ENCODE measurements at regions of chr3 and their contacts with region 1.

Region 1: GRCh38 chr3:129316131-129317013 is 37.7 kb downstream of the HMCES start:
- DNase-seq: peak; percentile 90
- H3K4me3 Mint-ChIP-seq: peak overlapping the region; percentile 95
- H3K27ac Mint-ChIP-seq: peak overlapping the region; percentile 79
- H3K4me1 Mint-ChIP-seq: peaks cover 34% of the 10 kb centered on the region
- H3K27me3 Mint-ChIP-seq: no peaks in the 10 kb centered on the region

Region 2: GRCh38 chr3:128680602-128681368 is 635.6 kb before region 1 on chr3:
- CTCF ChIA-PET with region 1: no interaction called
- POLR2A ChIA-PET with region 1: interaction called, 12 read pairs
- DNase-seq: peak; percentile 97
- H3K4me3 Mint-ChIP-seq: peak overlapping the region; percentile 86
- H3K27ac Mint-ChIP-seq: peak overlapping the region; percentile 86
- H3K4me1 Mint-ChIP-seq: peaks cover 38% of the 10 kb centered on the region
- H3K27me3 Mint-ChIP-seq: peaks cover 6% of the 10 kb centered on the region

Region 3: DNA sequence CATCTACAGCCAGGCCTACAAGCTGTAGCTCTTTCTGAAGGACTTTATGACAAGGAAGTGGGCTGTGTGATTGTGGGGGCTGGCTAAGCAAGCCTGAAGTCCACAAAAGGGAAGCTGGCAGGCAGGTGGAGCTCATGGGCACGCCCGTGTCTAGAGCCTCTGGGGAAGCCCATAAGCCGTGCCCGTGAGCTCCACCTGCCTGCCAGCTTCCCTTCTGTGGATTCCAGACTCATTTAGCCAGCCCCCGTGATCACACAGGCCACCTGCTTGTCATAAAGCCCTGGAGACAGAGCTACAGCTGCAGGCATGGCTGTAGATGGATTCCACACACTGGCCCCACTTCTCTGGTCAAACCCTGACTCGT is 300.0 kb before region 1 on chr3:
- CTCF ChIA-PET with region 1: interaction called, 4 read pairs
- POLR2A ChIA-PET with region 1: interaction called, 39 read pairs
- DNase-seq: peak; percentile 68
- H3K4me3 Mint-ChIP-seq: peak overlapping the region; percentile 64
- H3K27ac Mint-ChIP-seq: peak overlapping the region; percentile 87
- H3K4me1 Mint-ChIP-seq: peaks cover 37% of the 10 kb centered on the region
- H3K27me3 Mint-ChIP-seq: no peaks in the 10 kb centered on the region

Region 4: DNA sequence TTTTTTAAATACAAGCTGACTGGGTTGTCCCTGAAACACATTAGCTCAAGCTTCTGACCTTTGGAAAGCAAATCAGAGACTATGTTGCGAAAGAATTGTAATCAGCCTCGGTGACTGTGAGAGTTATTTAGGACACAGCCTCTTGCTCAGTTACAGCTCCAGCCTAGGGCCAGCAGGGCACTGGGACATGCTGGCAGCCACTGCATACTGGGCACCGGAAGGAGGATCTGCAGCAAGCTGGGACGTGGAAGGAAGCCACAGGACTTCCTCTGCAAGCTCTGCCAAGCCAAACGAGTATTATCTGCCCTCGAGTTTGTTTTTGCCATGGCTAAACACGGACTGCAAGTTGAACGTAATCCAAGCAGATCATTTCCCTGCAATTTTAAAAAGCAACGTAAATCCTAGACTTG is 91.4 kb before region 1 on chr3:
- CTCF ChIA-PET with region 1: no interaction called
- POLR2A ChIA-PET with region 1: interaction called, 10 read pairs
- DNase-seq: peak; percentile 42
- H3K4me3 Mint-ChIP-seq: no peak overlapping the region
- H3K27ac Mint-ChIP-seq: peak overlapping the region; percentile 73
- H3K4me1 Mint-ChIP-seq: peaks cover 50% of the 10 kb centered on the region
- H3K27me3 Mint-ChIP-seq: no peaks in the 10 kb centered on the region

Region 5: DNA sequence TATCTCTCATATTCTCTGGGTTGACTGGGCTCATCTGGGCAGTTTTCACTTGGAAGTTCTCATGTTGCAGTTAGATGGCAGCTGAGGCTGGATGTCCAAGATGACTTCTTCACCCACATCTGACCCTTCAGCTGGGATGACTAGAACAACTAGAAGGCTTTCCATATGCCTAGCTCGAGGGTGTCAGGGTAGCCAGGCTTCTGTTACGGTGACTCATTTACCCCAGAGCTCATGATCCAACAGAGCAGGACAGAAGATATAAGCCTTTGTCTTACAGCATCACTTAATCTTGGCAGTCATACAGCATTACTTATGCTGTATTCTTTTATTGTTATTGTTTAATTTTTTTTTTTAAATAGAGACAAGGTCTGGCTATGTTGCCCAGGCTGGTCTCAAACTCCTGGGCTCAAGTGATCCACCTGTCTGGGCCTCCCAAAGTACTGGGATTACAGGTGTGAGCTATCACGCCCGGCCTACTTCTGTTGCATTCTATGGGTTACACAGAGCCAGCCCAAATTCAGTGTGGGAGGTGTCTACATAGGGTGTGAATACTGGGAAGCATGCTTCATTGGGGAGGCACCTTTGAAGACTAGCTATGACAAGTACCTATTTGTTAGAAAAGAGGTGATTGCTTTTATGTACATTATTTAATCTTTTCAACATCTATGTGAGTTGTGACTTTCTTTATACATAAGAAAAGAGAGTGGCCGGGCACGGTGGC is 27.0 kb before region 1 on chr3:
- CTCF ChIA-PET with region 1: interaction called, 6 read pairs
- POLR2A ChIA-PET with region 1: interaction called, 197 read pairs
- DNase-seq: no peak
- H3K4me3 Mint-ChIP-seq: no peak overlapping the region
- H3K27ac Mint-ChIP-seq: no peak overlapping the region
- H3K4me1 Mint-ChIP-seq: no peaks in the 10 kb centered on the region
- H3K27me3 Mint-ChIP-seq: no peaks in the 10 kb centered on the region

Region 6: DNA sequence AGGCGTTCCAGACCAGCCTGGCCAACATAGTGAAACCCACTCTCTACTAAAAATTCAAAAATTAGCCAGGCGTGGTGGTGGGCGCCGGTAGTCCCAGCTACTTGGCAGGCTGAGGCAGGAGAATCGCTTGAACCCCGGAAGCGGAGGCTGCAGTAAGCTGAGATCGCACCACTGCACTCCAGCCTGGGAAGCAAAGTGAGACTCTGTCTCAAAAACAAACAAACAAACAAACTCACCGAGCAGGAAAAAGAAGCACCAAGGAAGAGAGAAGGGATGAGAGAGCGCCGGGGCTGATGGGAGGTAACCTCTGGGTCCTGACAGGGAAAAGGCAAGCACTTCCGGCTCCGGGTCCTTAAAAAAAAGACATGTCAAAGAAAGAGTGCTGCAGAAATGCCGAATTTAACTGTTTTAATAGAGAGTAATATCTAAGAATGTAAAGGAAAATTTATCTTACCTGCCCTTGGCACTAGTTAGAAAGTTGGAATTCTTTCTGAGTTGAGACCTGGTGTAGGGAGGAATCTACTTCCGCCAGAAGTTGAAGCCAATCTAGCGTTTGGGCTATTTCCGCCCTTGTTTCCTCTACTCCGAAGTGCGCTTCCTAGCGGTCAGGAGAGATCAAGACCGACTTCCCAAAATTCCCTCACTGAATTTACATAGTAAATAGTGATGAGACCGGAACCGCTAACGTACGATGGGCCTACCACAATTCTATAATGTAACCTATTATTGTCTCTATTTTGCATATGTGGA is 82.9 kb after region 1 on chr3:
- CTCF ChIA-PET with region 1: interaction called, 8 read pairs
- POLR2A ChIA-PET with region 1: interaction called, 18 read pairs
- DNase-seq: peak; percentile 77
- H3K4me3 Mint-ChIP-seq: peak overlapping the region; percentile 98
- H3K27ac Mint-ChIP-seq: peak overlapping the region; percentile 94
- H3K4me1 Mint-ChIP-seq: peaks cover 41% of the 10 kb centered on the region
- H3K27me3 Mint-ChIP-seq: no peaks in the 10 kb centered on the region